OCI-LY7 (cell line): ENCODE measurements at regions of chr5 and their contacts with region 1.

Region 1: GRCh38 chr5:131252824-131253171 is 11.1 kb upstream of the CDC42SE2 start:
- DNase-seq: peak; percentile 91
- H3K4me3 ChIP-seq: peak overlapping the region; percentile 67
- H3K27ac ChIP-seq: peak overlapping the region; percentile 80
- H3K4me1 ChIP-seq: peaks cover 60% of the 10 kb centered on the region
- CTCF ChIP-seq: no peak

Region 2: GRCh38 chr5:131170540-131171275 is 82.1 kb before region 1 on chr5 and contains the start of gene LYRM7:
- CTCF ChIA-PET with region 1: no interaction called
- POLR2A ChIA-PET with region 1: interaction called, 10 read pairs
- intact Hi-C with region 1: loop called (anchors 2 kb)
- DNase-seq: peak; percentile 100
- H3K4me3 ChIP-seq: peak within 1 kb of the TSS; percentile 79
- H3K27ac ChIP-seq: peak within 1 kb of the TSS; percentile 65
- H3K4me1 ChIP-seq: peaks cover 27% of the 10 kb centered on the region
- CTCF ChIP-seq: no peak
- total RNA-seq, gene LYRM7: 14.4 and 18.2 TPM in 2 replicates

Region 3: GRCh38 chr5:131209506-131210150 is 43.2 kb before region 1 on chr5:
- CTCF ChIA-PET with region 1: no interaction called
- POLR2A ChIA-PET with region 1: interaction called, 17 read pairs
- intact Hi-C with region 1: loop called (anchors 1 kb)
- DNase-seq: peak; percentile 94
- H3K4me3 ChIP-seq: peak overlapping the region; percentile 68
- H3K27ac ChIP-seq: peak overlapping the region; percentile 96
- H3K4me1 ChIP-seq: peaks cover 67% of the 10 kb centered on the region
- CTCF ChIP-seq: no peak

Region 4: GRCh38 chr5:131214609-131215227 is 38.1 kb before region 1 on chr5:
- CTCF ChIA-PET with region 1: no interaction called
- POLR2A ChIA-PET with region 1: interaction called, 17 read pairs
- intact Hi-C with region 1: loop called (anchors 1 kb)
- DNase-seq: no peak
- H3K4me3 ChIP-seq: no peak overlapping the region
- H3K27ac ChIP-seq: no peak overlapping the region
- H3K4me1 ChIP-seq: peaks cover 45% of the 10 kb centered on the region
- CTCF ChIP-seq: no peak

Region 5: GRCh38 chr5:131230406-131230805 is 22.4 kb before region 1 on chr5:
- CTCF ChIA-PET with region 1: no interaction called
- POLR2A ChIA-PET with region 1: interaction called, 25 read pairs
- intact Hi-C with region 1: no loop called
- DNase-seq: no peak
- H3K4me3 ChIP-seq: no peak overlapping the region
- H3K27ac ChIP-seq: no peak overlapping the region
- H3K4me1 ChIP-seq: peaks cover 15% of the 10 kb centered on the region
- CTCF ChIP-seq: no peak